Heart right ventricle (tissue), 16 donors: ENCODE measurements at regions of chr4 and their contacts with region 1.

Region 1: GRCh38 chr4:174377613-174378012 is 93.9 kb downstream of the CEP44 start:
- DNase-seq: no peak
- ATAC-seq: no peak
- H3K4me3 ChIP-seq: no peak overlapping the region
- H3K27ac ChIP-seq: no peak overlapping the region
- H3K4me1 ChIP-seq: no peaks in the 10 kb centered on the region
- H3K27me3 ChIP-seq: no peaks in the 10 kb centered on the region
- CTCF ChIP-seq: no peak

Region 2: DNA sequence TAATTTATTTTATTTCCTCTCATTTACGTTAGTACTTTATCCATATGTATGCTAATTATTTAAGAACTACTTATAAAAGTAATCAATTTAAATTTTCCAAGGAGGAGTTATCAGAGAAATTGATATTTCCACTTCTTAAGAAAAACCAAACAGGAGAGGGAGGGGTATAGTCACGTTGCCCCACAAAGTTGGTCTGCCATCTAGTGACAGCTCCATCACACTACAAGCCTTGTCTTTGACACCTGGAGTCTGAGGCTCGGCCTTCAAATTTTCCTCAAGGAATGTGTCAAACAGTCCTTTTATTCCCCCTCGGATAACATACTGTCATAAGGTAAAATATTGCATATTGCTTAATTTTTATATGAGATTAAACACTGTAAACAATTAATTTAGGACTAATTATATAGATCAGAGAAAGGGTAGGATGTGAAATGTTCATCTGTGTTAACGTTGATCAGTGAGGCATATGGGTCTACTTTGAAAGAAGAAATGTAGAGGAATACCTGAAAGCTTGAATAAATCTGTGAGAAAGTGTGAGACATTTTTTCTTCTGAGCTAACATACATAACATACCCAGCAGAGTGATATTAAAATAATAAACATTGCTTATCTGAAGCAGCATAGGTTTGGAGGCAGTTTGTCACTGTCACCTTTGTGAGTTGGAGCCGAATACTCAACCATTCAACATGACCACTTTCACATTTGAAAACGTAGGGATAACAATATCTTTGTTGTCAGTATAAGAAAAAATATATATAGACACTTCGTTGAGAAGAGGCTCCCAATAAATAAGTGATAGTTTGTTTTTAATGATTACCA is 337.0 kb after region 1 on chr4:
- intact Hi-C with region 1: loop called in 1 of 10 experiments (anchors 10 kb)
- DNase-seq: no peak
- ATAC-seq: peak in 2 of 8 donors; percentile 37 to 42
- H3K4me3 ChIP-seq: no peak overlapping the region
- H3K27ac ChIP-seq: no peak overlapping the region
- H3K4me1 ChIP-seq: peaks cover 0 to 7% (median 0%) of the 10 kb centered on the region in 9 donors
- H3K27me3 ChIP-seq: no peaks in the 10 kb centered on the region
- CTCF ChIP-seq: peak; percentile 6 to 69 (median 58)